B cell (primary cell): ENCODE measurements at regions of chr11 and their contacts with region 1.

Region 1: GRCh38 chr11:66855574-66856495 is 1.0 kb upstream of the LRFN4 start:
- DNase-seq: no peak
- ATAC-seq: peak; percentile 87
- H3K4me3 ChIP-seq: peak overlapping the region; percentile 11 to 74 (median 70)
- H3K4me3 Mint-ChIP-seq: peak overlapping the region; percentile 94
- H3K27ac ChIP-seq: peak overlapping the region; percentile 65 to 78
- H3K27ac Mint-ChIP-seq: peak overlapping the region; percentile 92
- H3K4me1 ChIP-seq: peaks cover 5 to 20% of the 10 kb centered on the region in 2 donors
- H3K4me1 Mint-ChIP-seq: peaks cover 14% of the 10 kb centered on the region
- H3K27me3 ChIP-seq: no peaks in the 10 kb centered on the region
- H3K27me3 Mint-ChIP-seq: no peaks in the 10 kb centered on the region
- CTCF ChIP-seq: no peak

Region 2: GRCh38 chr11:66842896-66843775 is 12.7 kb before region 1 on chr11 and contains the start of gene RCE1:
- CTCF ChIA-PET with region 1: interaction called, 8 read pairs
- POLR2A ChIA-PET with region 1: interaction called, 18 read pairs
- intact Hi-C with region 1: loop called (anchors 1 kb)
- DNase-seq: peak; percentile 96
- ATAC-seq: peak; percentile 91
- H3K4me3 ChIP-seq: peak within 1 kb of the TSS; percentile 74 to 100 (median 95)
- H3K4me3 Mint-ChIP-seq: peak within 1 kb of the TSS; percentile 90
- H3K27ac ChIP-seq: peak within 1 kb of the TSS; percentile 98 to 99
- H3K27ac Mint-ChIP-seq: peak within 1 kb of the TSS; percentile 94
- H3K4me1 ChIP-seq: peaks cover 28 to 37% of the 10 kb centered on the region in 2 donors
- H3K4me1 Mint-ChIP-seq: peaks cover 43% of the 10 kb centered on the region
- H3K27me3 ChIP-seq: no peaks in the 10 kb centered on the region
- H3K27me3 Mint-ChIP-seq: no peaks in the 10 kb centered on the region
- CTCF ChIP-seq: no peak
- total RNA-seq, gene RCE1: 31.6 and 34.3 TPM in 2 replicates

Region 3: DNA sequence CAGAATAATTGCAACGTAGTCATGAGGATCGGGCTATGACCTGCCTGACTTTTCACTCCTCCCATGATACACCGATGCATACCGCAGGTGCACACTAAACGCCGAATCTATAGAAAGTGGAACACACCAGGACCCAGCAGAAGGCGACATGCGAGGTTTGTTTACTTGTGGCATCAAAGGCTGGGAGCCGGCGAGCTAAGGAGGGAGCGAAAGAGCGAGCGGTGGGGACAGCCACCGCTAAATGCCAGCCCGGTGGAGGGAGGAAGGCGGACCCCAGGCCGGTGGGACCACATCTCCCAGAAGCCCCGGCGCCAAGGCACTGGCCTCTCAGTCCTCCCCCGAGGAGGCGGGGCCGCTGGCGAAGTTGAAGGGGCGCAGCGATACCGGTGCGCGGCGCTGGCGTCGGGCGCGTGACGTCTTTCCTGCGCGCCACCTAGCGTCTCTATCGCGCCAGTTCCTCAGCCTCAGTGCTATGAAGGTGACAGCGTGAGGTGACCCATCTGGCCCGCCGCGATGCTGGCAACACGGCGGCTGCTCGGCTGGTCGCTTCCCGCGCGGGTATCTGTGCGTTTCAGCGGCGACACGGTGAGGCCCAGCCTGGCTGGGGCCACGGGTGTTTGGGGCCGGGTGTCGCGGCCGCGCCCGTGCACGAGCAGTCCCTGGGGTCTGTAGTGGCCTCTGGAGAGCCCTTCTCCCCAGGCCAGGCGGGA is 750.8 kb after region 1 on chr11 and contains the start of gene NDUFV1:
- CTCF ChIA-PET with region 1: no interaction called
- POLR2A ChIA-PET with region 1: interaction called, 15 read pairs
- intact Hi-C with region 1: no loop called
- DNase-seq: peak; percentile 97
- ATAC-seq: peak; percentile 99
- H3K4me3 ChIP-seq: peak within 1 kb of the TSS; percentile 70 to 90 (median 88)
- H3K4me3 Mint-ChIP-seq: peak within 1 kb of the TSS; percentile 95
- H3K27ac ChIP-seq: peak within 1 kb of the TSS; percentile 43 to 72
- H3K27ac Mint-ChIP-seq: peak within 1 kb of the TSS; percentile 90
- H3K4me1 ChIP-seq: peaks cover 13 to 17% of the 10 kb centered on the region in 2 donors
- H3K4me1 Mint-ChIP-seq: peaks cover 20% of the 10 kb centered on the region
- H3K27me3 ChIP-seq: peaks cover 0 to 16% (median 5%) of the 10 kb centered on the region in 4 experiments
- H3K27me3 Mint-ChIP-seq: peaks cover 18% of the 10 kb centered on the region
- CTCF ChIP-seq: peak; percentile 82
- total RNA-seq, gene NDUFV1: 232 and 238 TPM in 2 replicates